Activated naive CD4-positive, alpha-beta T cell treated with anti-CD3 and anti-CD28 coated beads for 36 hours (primary cell): ENCODE measurements at regions of chr17 and their contacts with region 1.

Region 1: DNA sequence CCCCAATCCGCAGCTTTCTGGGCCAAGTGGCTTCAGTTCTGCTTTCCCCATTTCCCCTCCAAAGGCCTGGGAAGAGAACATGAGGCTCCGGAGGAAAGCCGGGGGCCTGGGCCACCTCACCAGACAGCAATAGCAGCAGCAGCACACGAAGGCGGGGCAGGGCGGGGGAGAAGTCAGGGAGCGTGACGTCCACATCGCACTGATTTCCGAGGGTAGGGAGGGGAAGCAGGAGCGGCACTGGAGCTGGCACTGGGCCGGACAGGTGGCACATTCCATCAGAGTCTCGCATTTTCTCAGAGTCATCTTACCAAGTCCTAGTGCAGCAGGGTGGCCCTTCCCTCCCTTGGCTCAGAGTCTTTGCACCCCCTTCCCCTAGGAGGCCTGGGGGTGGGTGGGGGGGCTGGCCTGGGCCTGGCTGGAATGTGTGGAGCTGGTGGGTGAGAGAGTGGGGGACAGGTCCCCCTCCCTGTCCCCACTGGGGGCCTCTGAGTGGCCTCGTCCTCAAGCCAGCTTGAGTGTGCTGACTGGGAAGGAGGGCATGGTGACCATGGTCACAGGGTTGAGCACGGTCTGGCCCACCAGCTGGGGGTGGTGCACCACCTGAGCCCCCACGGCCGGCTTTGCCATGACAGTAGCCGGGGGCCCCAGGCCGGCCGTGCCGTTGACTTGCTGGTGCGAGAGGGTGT is 14.3 kb downstream of the MNT start:
- DNase-seq: no peak
- H3K4me3 Mint-ChIP-seq: no peak overlapping the region
- H3K27ac Mint-ChIP-seq: no peak overlapping the region
- H3K4me1 Mint-ChIP-seq: peaks cover 22% of the 10 kb centered on the region
- H3K27me3 Mint-ChIP-seq: no peaks in the 10 kb centered on the region

Region 2: GRCh38 chr17:2029911-2030778 is 356.4 kb before region 1 on chr17 and contains the start of gene DPH1:
- CTCF ChIA-PET with region 1: no interaction called
- intact Hi-C with region 1: no loop called
- DNase-seq: peak; percentile 91
- H3K4me3 Mint-ChIP-seq: peak within 1 kb of the TSS; percentile 94
- H3K27ac Mint-ChIP-seq: peak within 1 kb of the TSS; percentile 61
- H3K4me1 Mint-ChIP-seq: peaks cover 29% of the 10 kb centered on the region
- H3K27me3 Mint-ChIP-seq: peaks cover 24% of the 10 kb centered on the region
- total RNA-seq, gene DPH1: 31.1 to 34.1 TPM

Region 3: DNA sequence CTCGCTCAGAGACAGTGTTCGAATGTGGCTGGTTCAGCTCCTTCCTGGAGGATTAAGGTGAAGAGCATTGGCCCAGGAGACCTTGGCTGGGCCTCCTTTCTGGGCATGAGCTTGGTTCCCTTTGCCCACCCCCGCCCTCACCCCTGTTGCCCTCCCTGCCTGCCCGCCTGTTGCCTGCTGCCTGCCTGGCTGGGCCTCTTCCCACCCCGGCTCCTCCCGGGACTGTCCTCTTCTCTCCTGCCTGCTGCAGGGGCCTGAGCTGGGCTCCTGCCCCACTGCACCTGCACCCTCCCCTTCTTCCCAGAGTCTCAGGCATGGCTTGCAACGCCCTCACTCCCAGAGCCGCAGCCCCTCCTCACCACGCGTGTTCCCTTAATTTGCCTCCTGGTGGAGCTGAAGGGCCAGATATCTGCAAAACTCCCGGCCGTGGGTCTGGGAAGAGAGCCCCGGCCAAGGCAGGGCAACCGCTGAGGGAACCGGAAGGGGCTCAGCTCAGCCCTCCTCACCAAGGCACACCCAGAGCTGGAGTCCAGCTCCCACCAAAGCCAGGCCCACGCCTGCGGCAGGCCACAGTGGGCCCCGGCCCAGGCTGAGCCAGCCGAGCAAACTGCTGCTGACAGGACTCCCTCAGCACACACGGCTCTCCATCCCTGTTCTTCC is 16.9 kb before region 1 on chr17:
- CTCF ChIA-PET with region 1: interaction called, 20 read pairs
- intact Hi-C with region 1: no loop called
- DNase-seq: no peak
- H3K4me3 Mint-ChIP-seq: no peak overlapping the region
- H3K27ac Mint-ChIP-seq: no peak overlapping the region
- H3K4me1 Mint-ChIP-seq: no peaks in the 10 kb centered on the region
- H3K27me3 Mint-ChIP-seq: no peaks in the 10 kb centered on the region

Region 4: DNA sequence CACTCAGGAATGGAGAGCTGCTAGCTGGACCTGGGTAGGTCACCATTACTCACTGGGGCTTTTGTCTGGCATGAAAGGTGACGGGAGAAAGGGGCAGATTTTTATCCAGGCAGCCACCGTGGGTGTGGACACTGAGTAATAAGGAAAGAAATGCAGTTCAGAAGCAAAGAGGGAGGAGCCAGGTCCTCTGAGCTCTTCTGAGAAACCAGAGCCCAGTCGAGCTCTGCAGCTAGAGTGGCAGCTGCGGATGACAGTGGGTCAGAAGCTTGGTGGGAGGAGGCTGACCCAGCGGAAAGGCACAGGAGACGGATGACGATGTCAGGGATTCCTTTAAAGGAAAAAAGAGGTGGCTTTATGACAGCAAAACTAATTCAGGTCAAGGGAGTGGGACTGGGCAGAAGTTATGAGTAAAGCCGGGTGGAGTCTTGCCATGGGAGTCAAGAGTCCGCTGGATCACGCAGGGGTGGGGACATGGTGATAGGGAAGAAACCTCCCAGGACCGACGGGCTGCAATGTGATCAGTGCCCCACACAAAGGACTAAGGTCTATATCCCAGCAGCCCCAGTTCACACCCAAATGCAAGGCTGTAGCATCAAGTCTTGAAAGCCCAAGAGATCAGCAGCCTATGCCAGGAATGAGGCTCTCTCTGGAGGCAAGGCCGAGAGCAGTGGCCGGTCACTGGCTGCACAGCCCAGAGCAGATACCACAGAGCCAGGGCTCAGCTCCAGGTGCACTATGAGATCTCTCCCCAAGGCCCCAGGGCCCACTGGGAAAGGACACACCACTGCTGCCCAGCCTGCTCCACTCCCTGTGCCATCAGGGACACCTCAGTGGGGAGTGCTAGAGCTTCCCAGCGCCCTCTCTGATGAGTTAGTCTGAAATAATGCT is 20.6 kb after region 1 on chr17:
- CTCF ChIA-PET with region 1: interaction called, 38 read pairs
- intact Hi-C with region 1: no loop called
- DNase-seq: no peak
- H3K4me3 Mint-ChIP-seq: no peak overlapping the region
- H3K27ac Mint-ChIP-seq: no peak overlapping the region
- H3K4me1 Mint-ChIP-seq: peaks cover 19% of the 10 kb centered on the region
- H3K27me3 Mint-ChIP-seq: no peaks in the 10 kb centered on the region

Region 5: GRCh38 chr17:2416010-2416734 is 29.6 kb after region 1 on chr17:
- CTCF ChIA-PET with region 1: interaction called, 247 read pairs
- intact Hi-C with region 1: loop called (anchors 1 kb)
- DNase-seq: peak; percentile 90
- H3K4me3 Mint-ChIP-seq: no peak overlapping the region
- H3K27ac Mint-ChIP-seq: peak overlapping the region; percentile 10
- H3K4me1 Mint-ChIP-seq: no peaks in the 10 kb centered on the region
- H3K27me3 Mint-ChIP-seq: no peaks in the 10 kb centered on the region

Region 6: DNA sequence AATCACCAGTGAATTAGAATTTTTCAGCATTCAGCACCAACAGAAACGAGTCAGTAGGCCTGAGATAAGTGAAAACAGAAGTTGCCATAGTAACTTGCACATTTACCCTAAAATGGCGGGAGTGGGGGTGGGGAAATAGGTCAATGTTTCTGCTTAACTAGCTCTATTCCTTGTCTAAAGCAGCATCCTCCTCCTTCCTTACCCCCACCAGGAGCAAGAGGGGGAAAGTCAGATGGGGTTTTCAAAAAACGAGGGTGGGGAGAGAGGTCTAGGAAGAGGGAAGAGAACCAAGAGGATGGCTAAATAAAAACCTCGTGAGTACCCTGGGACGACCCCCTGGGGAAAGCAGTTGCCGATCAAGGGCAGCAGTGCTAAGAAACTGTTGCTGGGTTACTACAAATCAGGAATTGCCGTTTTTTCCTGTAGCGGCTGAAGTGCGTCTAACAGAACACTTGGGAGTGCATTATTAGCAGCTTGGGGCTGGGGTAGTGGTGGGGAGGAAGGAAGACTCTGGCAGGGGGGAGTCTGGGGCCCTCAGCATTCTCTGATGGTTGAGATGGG is 48.7 kb after region 1 on chr17:
- CTCF ChIA-PET with region 1: interaction called, 13 read pairs
- intact Hi-C with region 1: no loop called
- DNase-seq: no peak
- H3K4me3 Mint-ChIP-seq: no peak overlapping the region
- H3K27ac Mint-ChIP-seq: no peak overlapping the region
- H3K4me1 Mint-ChIP-seq: peaks cover 4% of the 10 kb centered on the region
- H3K27me3 Mint-ChIP-seq: no peaks in the 10 kb centered on the region

Region 7: DNA sequence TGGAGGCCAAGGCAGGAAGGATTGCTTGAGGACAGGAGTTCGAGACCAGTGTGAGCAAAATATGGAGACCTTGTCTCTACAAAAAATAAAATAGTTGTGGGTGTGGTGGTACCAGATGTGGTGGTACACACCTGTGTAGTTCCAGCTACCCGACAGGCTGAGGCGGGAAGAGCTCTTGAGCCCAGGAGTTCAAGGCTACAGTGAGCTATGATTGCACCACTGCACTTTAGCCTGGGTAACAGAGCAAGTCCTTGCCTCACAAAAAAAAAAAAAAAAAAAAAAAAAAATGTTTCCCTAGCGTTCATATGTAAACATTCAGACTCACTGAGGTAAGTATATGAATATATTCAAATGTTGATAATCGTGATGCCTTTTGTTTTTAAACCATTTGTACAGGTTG is 285.5 kb after region 1 on chr17:
- CTCF ChIA-PET with region 1: interaction called, 13 read pairs
- intact Hi-C with region 1: no loop called
- DNase-seq: no peak
- H3K4me3 Mint-ChIP-seq: no peak overlapping the region
- H3K27ac Mint-ChIP-seq: no peak overlapping the region
- H3K4me1 Mint-ChIP-seq: peaks cover 6% of the 10 kb centered on the region
- H3K27me3 Mint-ChIP-seq: no peaks in the 10 kb centered on the region

Region 8: DNA sequence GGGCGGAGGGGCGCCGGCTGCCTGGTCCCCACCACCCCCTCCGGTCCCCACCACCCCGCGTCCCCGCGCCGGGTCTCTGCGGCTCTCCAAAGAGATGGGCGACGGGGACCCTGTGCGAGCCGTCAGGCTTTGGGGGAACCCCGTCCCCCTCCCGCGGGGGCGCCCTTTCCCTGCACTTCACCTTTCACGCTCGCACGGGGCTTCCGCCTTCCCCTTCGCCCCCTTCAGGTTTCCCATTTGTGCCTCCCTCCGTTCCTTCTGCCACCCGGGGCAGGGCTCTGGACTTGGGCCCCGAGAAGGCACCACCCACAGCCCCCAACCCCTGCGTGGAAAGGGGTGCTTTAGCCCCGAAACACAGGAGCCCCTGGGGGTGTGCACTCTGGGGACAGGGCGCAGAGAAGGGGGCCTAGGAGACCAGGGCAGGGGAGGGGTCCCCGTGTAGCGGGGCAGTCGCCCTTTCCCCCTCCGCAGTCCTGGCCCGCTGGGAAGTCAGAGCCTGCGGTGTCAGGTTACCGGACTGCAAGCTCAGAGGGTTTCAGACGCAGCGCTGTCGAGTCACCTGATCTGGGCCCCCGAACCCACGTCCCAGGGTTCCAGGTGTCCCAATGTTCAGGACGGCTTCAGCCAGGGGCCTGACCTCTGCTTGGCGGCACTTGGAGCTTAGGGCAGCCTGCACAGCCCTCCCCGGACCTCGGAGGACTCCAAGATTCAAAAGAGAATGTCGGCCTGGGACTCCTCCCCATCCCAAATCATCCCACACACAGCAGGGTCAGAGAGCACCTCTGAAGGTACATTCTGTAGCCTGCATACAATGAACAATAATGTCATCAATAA is 369.6 kb after region 1 on chr17:
- CTCF ChIA-PET with region 1: no interaction called
- intact Hi-C with region 1: no loop called
- DNase-seq: no peak
- H3K4me3 Mint-ChIP-seq: peak overlapping the region; percentile 24
- H3K27ac Mint-ChIP-seq: no peak overlapping the region
- H3K4me1 Mint-ChIP-seq: no peaks in the 10 kb centered on the region
- H3K27me3 Mint-ChIP-seq: peaks cover 31% of the 10 kb centered on the region

Region 9: DNA sequence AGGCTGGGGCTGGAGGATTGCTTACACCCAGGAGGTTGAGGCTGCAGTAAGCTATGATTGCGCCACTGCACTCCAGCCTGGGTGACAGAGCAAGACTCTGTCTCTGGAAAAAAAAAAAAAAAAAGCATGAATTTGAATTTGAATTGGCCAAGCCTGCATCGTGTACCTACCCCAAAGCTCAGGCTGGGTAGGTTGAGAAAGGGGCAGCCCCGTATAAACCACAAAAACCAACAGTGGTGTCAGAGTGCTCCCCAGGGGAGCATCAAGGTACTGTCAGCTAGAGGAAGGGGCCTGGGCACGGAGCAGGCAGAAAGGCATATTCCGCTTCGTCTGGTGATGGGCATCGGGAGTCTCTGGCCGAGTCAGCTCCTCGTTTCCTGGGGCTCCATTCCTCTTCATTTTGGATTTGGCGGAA is 450.6 kb after region 1 on chr17:
- CTCF ChIA-PET with region 1: interaction called, 5 read pairs
- intact Hi-C with region 1: loop called (anchors 1 kb)
- DNase-seq: peak; percentile 79
- H3K4me3 Mint-ChIP-seq: no peak overlapping the region
- H3K27ac Mint-ChIP-seq: no peak overlapping the region
- H3K4me1 Mint-ChIP-seq: peaks cover 5% of the 10 kb centered on the region
- H3K27me3 Mint-ChIP-seq: no peaks in the 10 kb centered on the region